Activated T-helper 1 cell treated with anti-CD3 and anti-CD28 coated beads, Interleukin-12 subunit alpha, Interleukin-12 subunit beta, Interleukin-2, Interleukin-4 antibody, amounts not matched to agents 30 ng/mL and 10 ng/mL and 1 ng/mL, durations not matched to agents 14 hours and 24 hours and 36 hours (primary cell): ENCODE measurements at regions of chr7 and their contacts with region 1.

Region 1: GRCh38 chr7:7772397-7772821 is 54.0 kb upstream of the RPA3 start:
- DNase-seq: no peak
- H3K4me3 Mint-ChIP-seq: peak overlapping the region; percentile 54
- H3K27ac Mint-ChIP-seq: peak overlapping the region; percentile 42
- H3K4me1 Mint-ChIP-seq: peaks cover 23% of the 10 kb centered on the region
- H3K27me3 Mint-ChIP-seq: peaks cover 3% of the 10 kb centered on the region

Region 2: GRCh38 chr7:7719236-7719635 is 53.2 kb before region 1 on chr7:
- intact Hi-C with region 1: loop called (anchors 2 kb)
- DNase-seq: peak; percentile 50
- H3K4me3 Mint-ChIP-seq: peak overlapping the region; percentile 56
- H3K27ac Mint-ChIP-seq: peak overlapping the region; percentile 80
- H3K4me1 Mint-ChIP-seq: peaks cover 27% of the 10 kb centered on the region
- H3K27me3 Mint-ChIP-seq: peaks cover 2% of the 10 kb centered on the region

Region 3: GRCh38 chr7:7816084-7816483 is 43.7 kb after region 1 on chr7:
- intact Hi-C with region 1: loop called (anchors 1 kb)
- DNase-seq: peak; percentile 7
- H3K4me3 Mint-ChIP-seq: peak overlapping the region; percentile 56
- H3K27ac Mint-ChIP-seq: peak overlapping the region; percentile 27
- H3K4me1 Mint-ChIP-seq: peaks cover 41% of the 10 kb centered on the region
- H3K27me3 Mint-ChIP-seq: peaks cover 2% of the 10 kb centered on the region

Region 4: GRCh38 chr7:7830122-7830878 is 57.9 kb after region 1 on chr7:
- intact Hi-C with region 1: loop called (anchors 1 kb)
- DNase-seq: no peak
- H3K4me3 Mint-ChIP-seq: no peak overlapping the region
- H3K27ac Mint-ChIP-seq: peak overlapping the region; percentile 61
- H3K4me1 Mint-ChIP-seq: peaks cover 7% of the 10 kb centered on the region
- H3K27me3 Mint-ChIP-seq: peaks cover 2% of the 10 kb centered on the region

Region 5: GRCh38 chr7:7851381-7851780 is 79.0 kb after region 1 on chr7:
- intact Hi-C with region 1: loop called (anchors 5 kb)
- DNase-seq: no peak
- H3K4me3 Mint-ChIP-seq: no peak overlapping the region
- H3K27ac Mint-ChIP-seq: no peak overlapping the region
- H3K4me1 Mint-ChIP-seq: peaks cover 30% of the 10 kb centered on the region
- H3K27me3 Mint-ChIP-seq: no peaks in the 10 kb centered on the region